ENCODE measurements at regions of chr12 and their contacts with region 1.

Region 1: GRCh38 chr12:20055856-20056255 is 312.5 kb upstream of the PDE3A start:
- DNase-seq: no peak
- H3K4me3 ChIP-seq: no peak overlapping the region
- H3K27ac ChIP-seq: peak overlapping the region in 1 of 2 donors; percentile 7
- H3K4me1 ChIP-seq: peaks cover 0 to 4% of the 10 kb centered on the region in 2 donors
- H3K27me3 ChIP-seq: no peaks in the 10 kb centered on the region
- CTCF ChIP-seq: no peak

Region 2: GRCh38 chr12:19978193-19978592 is 77.7 kb before region 1 on chr12:
- intact Hi-C with region 1: no loop called
- DNase-seq: no peak
- H3K4me3 ChIP-seq: no peak overlapping the region
- H3K27ac ChIP-seq: no peak overlapping the region
- H3K4me1 ChIP-seq: peaks cover 0 to 5% of the 10 kb centered on the region in 2 donors
- H3K27me3 ChIP-seq: no peaks in the 10 kb centered on the region
- CTCF ChIP-seq: no peak

Region 3: GRCh38 chr12:20024194-20024593 is 31.7 kb before region 1 on chr12:
- intact Hi-C with region 1: no loop called
- DNase-seq: no peak
- H3K4me3 ChIP-seq: no peak overlapping the region
- H3K27ac ChIP-seq: no peak overlapping the region
- H3K4me1 ChIP-seq: no peaks in the 10 kb centered on the region
- H3K27me3 ChIP-seq: no peaks in the 10 kb centered on the region
- CTCF ChIP-seq: no peak

Region 4: GRCh38 chr12:20097626-20098025 is 41.8 kb after region 1 on chr12:
- intact Hi-C with region 1: loop called (anchors 5 kb)
- DNase-seq: no peak
- H3K4me3 ChIP-seq: no peak overlapping the region
- H3K27ac ChIP-seq: peak overlapping the region; percentile 68 to 77
- H3K4me1 ChIP-seq: peaks cover 0 to 29% of the 10 kb centered on the region in 2 donors
- H3K27me3 ChIP-seq: no peaks in the 10 kb centered on the region
- CTCF ChIP-seq: no peak

Measured in ascending aorta (tissue), 2 donors.